Naive thymus-derived CD4-positive, alpha-beta T cell (primary cell): ENCODE measurements at regions of chr20 and their contacts with region 1.

Region 1: DNA sequence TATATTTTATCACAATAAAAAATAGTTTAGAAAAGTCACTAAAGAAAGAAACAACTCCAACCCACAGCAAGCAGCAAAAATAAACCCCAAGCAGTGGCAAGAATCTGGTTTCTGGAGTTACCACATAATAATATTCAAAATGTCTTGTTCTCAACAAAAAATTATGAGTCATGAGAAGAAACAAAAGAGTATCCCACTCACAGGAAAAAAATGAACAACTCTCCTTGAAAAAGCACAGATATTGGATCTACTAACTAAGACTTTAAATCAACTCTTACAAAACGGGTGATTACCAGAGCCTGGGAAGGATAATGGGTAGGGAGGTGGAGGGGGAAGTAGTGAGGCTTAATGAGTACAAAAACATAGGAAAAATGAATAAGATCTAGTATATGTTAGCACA is 425.6 kb downstream of the PLCB1 start:
- DNase-seq: no peak
- ATAC-seq: no peak
- H3K4me3 ChIP-seq: no peak overlapping the region
- H3K4me3 Mint-ChIP-seq: no peak overlapping the region
- H3K27ac ChIP-seq: no peak overlapping the region
- H3K27ac Mint-ChIP-seq: no peak overlapping the region
- H3K4me1 ChIP-seq: no peaks in the 10 kb centered on the region
- H3K4me1 Mint-ChIP-seq: peaks cover 0 to 1% (median 0%) of the 10 kb centered on the region in 7 donors
- H3K27me3 ChIP-seq: no peaks in the 10 kb centered on the region
- H3K27me3 Mint-ChIP-seq: peaks cover 0 to 7% (median 0%) of the 10 kb centered on the region in 5 donors

Region 2: GRCh38 chr20:8616792-8617191 is 59.1 kb after region 1 on chr20:
- CTCF ChIA-PET with region 1: no interaction called
- POLR2A ChIA-PET with region 1: no interaction called
- intact Hi-C with region 1: loop called in 1 of 2 experiments (anchors 10 kb)
- DNase-seq: no peak
- ATAC-seq: no peak
- H3K4me3 ChIP-seq: no peak overlapping the region
- H3K4me3 Mint-ChIP-seq: no peak overlapping the region
- H3K27ac ChIP-seq: no peak overlapping the region
- H3K27ac Mint-ChIP-seq: no peak overlapping the region
- H3K4me1 ChIP-seq: no peaks in the 10 kb centered on the region
- H3K4me1 Mint-ChIP-seq: no peaks in the 10 kb centered on the region
- H3K27me3 ChIP-seq: no peaks in the 10 kb centered on the region
- H3K27me3 Mint-ChIP-seq: peaks cover 0 to 7% (median 0%) of the 10 kb centered on the region in 5 donors